ENCODE measurements at regions of chr22 and their contacts with region 1.

Region 1: GRCh38 chr22:29031227-29032011 is 30.2 kb downstream of the C22orf31 start:
- DNase-seq: peak; percentile 47 to 60
- H3K4me3 ChIP-seq: peak overlapping the region in 2 of 4 experiments; percentile 11 to 59; a peak in 3 of 8 replicates
- H3K27ac ChIP-seq: 0 out of 2 replicates have a peak overlapping the region, but pooled peaks have one; percentile 35
- H3K4me1 ChIP-seq: peaks cover 11 to 20% (median 15%) of the 10 kb centered on the region in 4 experiments
- H3K27me3 ChIP-seq: no peaks in the 10 kb centered on the region
- CTCF ChIP-seq: 0 out of 4 replicates have a peak, but pooled peaks of 1 of the 3 experiments have one; percentile 6
- EP300 ChIP-seq: no peak
- POLR2A ChIP-seq: no peak
- RAD21 ChIP-seq: peak in 1 of 2 experiments; percentile 36; a peak in 1 of 4 replicates

Region 2: GRCh38 chr22:29011240-29012100 is 19.9 kb before region 1 on chr22:
- CTCF ChIA-PET with region 1: interaction called, 37 read pairs
- POLR2A ChIA-PET with region 1: interaction called, 16 read pairs
- DNase-seq: no peak
- H3K4me3 ChIP-seq: no peak overlapping the region
- H3K27ac ChIP-seq: no peak overlapping the region
- H3K4me1 ChIP-seq: peaks cover 5 to 27% (median 10%) of the 10 kb centered on the region in 4 experiments; a peak in 5 of 7 replicates
- H3K27me3 ChIP-seq: no peaks in the 10 kb centered on the region; a peak in 1 of 7 replicates
- CTCF ChIP-seq: no peak
- EP300 ChIP-seq: no peak
- POLR2A ChIP-seq: no peak
- RAD21 ChIP-seq: no peak